ENCODE measurements at regions of chr7 and their contacts with region 1.

Region 1: DNA sequence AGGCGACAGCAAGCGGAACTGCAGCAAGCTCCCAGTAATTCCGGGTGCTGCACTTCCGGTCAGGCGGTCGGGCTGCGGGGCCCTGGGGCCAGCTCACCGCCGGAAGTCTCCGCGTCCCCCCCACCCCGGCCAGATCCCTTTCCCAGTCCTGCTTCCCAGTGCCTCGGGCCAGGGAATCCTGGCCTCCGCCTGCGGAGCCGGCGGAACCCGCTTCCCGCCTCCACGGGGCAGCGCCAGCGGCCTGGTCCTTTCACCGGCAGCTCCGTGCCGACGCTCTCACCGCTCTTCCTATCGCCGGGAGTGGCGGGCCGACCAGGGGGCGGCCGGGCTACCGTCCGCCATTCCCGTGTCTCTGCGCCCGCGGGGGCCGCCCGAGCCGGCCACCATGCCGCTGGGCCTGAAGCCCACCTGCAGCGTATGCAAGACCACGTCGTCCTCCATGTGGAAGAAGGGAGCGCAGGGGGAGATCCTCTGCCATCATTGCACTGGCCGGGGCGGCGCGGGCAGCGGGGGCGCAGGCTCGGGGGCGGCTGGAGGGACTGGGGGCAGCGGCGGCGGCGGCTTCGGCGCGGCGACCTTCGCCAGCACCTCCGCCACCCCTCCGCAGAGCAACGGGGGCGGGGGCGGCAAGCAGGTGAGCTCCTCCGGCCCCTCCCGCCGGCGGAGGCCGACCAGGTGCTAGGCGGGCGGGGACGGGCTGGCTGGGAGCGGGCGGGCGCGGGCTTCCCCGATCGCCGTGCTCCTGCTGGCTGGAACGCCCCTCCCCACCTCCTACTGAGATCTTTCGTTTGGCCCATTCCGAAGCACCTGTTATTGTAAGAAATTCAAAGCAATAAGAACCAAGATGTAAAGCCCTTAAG is at the start of gene GATAD1:
- DNase-seq: peak; percentile 86
- ATAC-seq: peak; percentile 92
- H3K4me3 Mint-ChIP-seq: peak within 1 kb of the TSS; percentile 76
- H3K27ac Mint-ChIP-seq: peak within 1 kb of the TSS; percentile 93
- H3K4me1 Mint-ChIP-seq: peaks cover 18% of the 10 kb centered on the region
- H3K27me3 Mint-ChIP-seq: no peaks in the 10 kb centered on the region
- CTCF ChIP-seq: no peak
- total RNA-seq, gene GATAD1: 19.7 to 19.8 TPM

Region 2: DNA sequence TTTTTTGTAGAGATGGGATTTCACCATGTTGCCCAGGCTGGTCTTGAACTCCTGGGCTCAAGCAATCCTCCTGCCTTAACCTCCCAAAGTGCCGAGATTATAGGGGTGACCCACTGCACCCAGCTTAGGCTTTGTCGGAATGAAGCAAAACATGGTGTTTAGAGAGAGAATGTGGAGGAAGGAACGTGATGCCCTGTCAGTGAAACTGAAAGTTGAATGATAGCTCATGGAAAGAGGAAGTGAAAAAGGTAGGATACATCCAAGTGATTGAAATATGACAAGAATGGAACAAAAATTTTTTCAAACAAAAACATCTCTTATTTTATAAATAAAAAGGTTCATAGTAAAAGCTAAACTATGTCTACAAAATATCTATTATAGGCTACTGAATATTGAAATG is 501.0 kb before region 1 on chr7:
- CTCF ChIA-PET with region 1: no interaction called
- POLR2A ChIA-PET with region 1: no interaction called
- intact Hi-C with region 1: no loop called
- DNase-seq: no peak
- ATAC-seq: no peak
- H3K4me3 Mint-ChIP-seq: no peak overlapping the region
- H3K27ac Mint-ChIP-seq: no peak overlapping the region
- H3K4me1 Mint-ChIP-seq: peaks cover 52% of the 10 kb centered on the region
- H3K27me3 Mint-ChIP-seq: no peaks in the 10 kb centered on the region
- CTCF ChIP-seq: no peak

Region 3: GRCh38 chr7:92177362-92177761 is 270.2 kb before region 1 on chr7:
- CTCF ChIA-PET with region 1: interaction called, 11 read pairs
- POLR2A ChIA-PET with region 1: interaction called, 3 read pairs
- intact Hi-C with region 1: no loop called
- DNase-seq: no peak
- ATAC-seq: no peak
- H3K4me3 Mint-ChIP-seq: no peak overlapping the region
- H3K27ac Mint-ChIP-seq: no peak overlapping the region
- H3K4me1 Mint-ChIP-seq: peaks cover 5% of the 10 kb centered on the region
- H3K27me3 Mint-ChIP-seq: peaks cover 14% of the 10 kb centered on the region
- CTCF ChIP-seq: no peak

Region 4: DNA sequence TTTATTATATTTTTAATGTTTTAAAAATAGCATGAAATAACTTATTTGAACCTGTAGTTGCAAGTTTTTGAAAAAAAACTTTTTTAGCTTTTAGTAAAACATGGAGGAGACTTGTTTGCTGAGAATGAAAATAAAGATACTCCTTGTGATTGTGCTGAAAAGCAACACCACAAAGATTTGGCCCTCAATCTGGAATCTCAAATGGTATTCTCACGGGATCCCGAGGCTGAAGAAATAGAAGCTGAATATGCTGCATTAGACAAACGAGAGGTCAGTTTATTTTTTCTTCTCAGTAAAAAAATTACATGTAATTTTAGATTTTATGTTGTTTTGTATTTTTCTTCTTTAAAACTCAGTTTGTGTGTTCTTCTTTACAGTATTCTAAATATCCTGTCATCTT is 128.3 kb before region 1 on chr7:
- CTCF ChIA-PET with region 1: no interaction called
- POLR2A ChIA-PET with region 1: no interaction called
- intact Hi-C with region 1: no loop called
- DNase-seq: no peak
- ATAC-seq: no peak
- H3K4me3 Mint-ChIP-seq: no peak overlapping the region
- H3K27ac Mint-ChIP-seq: no peak overlapping the region
- H3K4me1 Mint-ChIP-seq: no peaks in the 10 kb centered on the region
- H3K27me3 Mint-ChIP-seq: no peaks in the 10 kb centered on the region
- CTCF ChIP-seq: no peak

Region 5: GRCh38 chr7:92391071-92391470 is 56.5 kb before region 1 on chr7:
- CTCF ChIA-PET with region 1: interaction called, 10 read pairs
- POLR2A ChIA-PET with region 1: no interaction called
- intact Hi-C with region 1: no loop called
- DNase-seq: no peak
- ATAC-seq: no peak
- H3K4me3 Mint-ChIP-seq: no peak overlapping the region
- H3K27ac Mint-ChIP-seq: no peak overlapping the region
- H3K4me1 Mint-ChIP-seq: no peaks in the 10 kb centered on the region
- H3K27me3 Mint-ChIP-seq: no peaks in the 10 kb centered on the region
- CTCF ChIP-seq: no peak

Region 6: GRCh38 chr7:92436612-92437445 is 10.7 kb before region 1 on chr7:
- CTCF ChIA-PET with region 1: interaction called, 12 read pairs
- POLR2A ChIA-PET with region 1: interaction called, 3 read pairs
- intact Hi-C with region 1: no loop called
- DNase-seq: no peak
- ATAC-seq: no peak
- H3K4me3 Mint-ChIP-seq: no peak overlapping the region
- H3K27ac Mint-ChIP-seq: no peak overlapping the region
- H3K4me1 Mint-ChIP-seq: peaks cover 3% of the 10 kb centered on the region
- H3K27me3 Mint-ChIP-seq: no peaks in the 10 kb centered on the region
- CTCF ChIP-seq: no peak

Region 7: DNA sequence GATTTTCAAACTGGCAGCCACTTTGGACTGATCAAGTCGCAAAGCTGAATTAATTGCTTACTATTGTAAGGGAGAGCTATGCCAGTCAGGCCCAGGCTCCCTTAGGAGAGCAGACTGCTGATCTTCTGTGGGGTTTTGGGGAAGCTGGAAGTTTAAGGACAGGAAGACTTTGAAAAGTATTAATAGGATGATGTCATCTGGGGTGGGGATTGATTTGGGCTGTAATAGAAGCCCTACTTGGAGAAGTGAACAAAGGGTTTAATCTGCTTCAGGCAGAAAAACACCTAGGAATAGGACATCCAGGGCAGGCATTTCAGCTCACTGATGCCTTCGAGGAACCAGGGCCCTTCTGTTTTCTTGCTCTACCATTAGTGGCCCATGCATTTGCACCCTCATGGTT is 20.0 kb after region 1 on chr7:
- CTCF ChIA-PET with region 1: no interaction called
- POLR2A ChIA-PET with region 1: no interaction called
- intact Hi-C with region 1: no loop called
- DNase-seq: no peak
- ATAC-seq: no peak
- H3K4me3 Mint-ChIP-seq: no peak overlapping the region
- H3K27ac Mint-ChIP-seq: no peak overlapping the region
- H3K4me1 Mint-ChIP-seq: no peaks in the 10 kb centered on the region
- H3K27me3 Mint-ChIP-seq: no peaks in the 10 kb centered on the region
- CTCF ChIP-seq: no peak

Region 8: DNA sequence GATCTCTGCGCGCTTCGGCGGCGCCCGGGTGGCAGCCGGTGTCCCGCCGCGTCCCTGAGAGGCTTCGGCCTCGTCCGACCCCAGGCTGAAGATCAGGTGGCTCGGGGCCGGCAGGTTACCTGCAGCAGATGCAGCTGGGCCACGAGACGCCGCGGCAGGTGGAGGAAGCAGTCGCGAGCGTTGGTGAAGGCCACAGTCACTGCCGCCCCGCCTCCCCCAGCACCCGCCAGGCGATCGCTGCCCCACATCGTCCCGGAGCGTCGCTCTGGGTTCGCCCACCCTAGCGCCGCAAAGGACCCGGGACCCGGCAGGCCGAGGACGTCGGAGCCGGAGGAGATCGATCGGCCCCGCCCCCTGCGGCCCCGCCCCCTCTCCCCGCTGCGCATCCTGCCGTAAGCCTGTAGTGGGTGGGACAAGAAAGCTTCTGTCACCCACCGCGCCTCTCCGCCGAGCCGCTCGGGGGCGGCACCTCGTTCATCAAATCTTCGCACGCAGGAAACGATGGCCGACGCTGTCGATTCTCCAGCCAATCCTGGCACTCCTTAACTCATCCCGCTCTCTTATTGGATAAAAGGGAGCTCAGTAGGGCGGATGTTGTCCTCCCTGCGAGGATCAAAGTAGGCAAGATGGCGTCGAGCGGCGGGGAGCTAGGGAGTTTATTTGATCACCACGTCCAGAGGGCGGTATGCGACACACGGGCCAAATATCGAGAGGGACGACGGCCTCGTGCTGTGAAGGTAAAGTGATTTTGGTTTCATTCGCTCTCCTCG is 80.8 kb after region 1 on chr7 and contains the starts of genes PEX1 and RBM48:
- CTCF ChIA-PET with region 1: interaction called, 10 read pairs
- POLR2A ChIA-PET with region 1: no interaction called
- intact Hi-C with region 1: no loop called
- DNase-seq: peak; percentile 97
- ATAC-seq: peak; percentile 94
- H3K4me3 Mint-ChIP-seq: peak within 1 kb of the TSS; percentile 84
- H3K27ac Mint-ChIP-seq: peak within 1 kb of the TSS; percentile 98
- H3K4me1 Mint-ChIP-seq: peaks cover 25% of the 10 kb centered on the region
- H3K27me3 Mint-ChIP-seq: no peaks in the 10 kb centered on the region
- CTCF ChIP-seq: no peak
- total RNA-seq, gene PEX1: 16.6 to 16.9 TPM
- total RNA-seq, gene RBM48: 11.5 to 13.4 TPM

Region 9: DNA sequence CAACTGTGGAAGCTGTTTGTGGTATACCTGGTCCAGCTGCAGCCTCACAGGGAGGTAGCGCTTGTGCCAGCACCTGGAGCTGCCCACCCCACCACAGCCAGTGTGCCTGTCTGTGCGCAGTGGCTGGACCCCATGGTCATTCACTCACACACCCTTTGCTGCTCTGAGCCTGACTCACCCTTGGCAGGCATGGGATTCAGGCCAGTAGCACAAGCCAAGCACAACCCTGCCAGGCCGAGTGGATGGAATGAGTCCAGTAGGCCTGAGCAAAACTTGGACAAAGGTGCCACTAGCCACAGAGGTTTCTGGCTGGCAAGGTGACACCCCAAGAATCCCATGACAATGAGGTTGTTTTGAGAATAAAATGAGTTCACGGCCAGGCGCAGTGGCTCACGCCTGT is 100.0 kb after region 1 on chr7:
- CTCF ChIA-PET with region 1: no interaction called
- POLR2A ChIA-PET with region 1: no interaction called
- intact Hi-C with region 1: no loop called
- DNase-seq: no peak
- ATAC-seq: no peak
- H3K4me3 Mint-ChIP-seq: no peak overlapping the region
- H3K27ac Mint-ChIP-seq: no peak overlapping the region
- H3K4me1 Mint-ChIP-seq: no peaks in the 10 kb centered on the region
- H3K27me3 Mint-ChIP-seq: no peaks in the 10 kb centered on the region
- CTCF ChIP-seq: no peak